ENCODE measurements at regions of chr20 and their contacts with region 1.

Region 1: DNA sequence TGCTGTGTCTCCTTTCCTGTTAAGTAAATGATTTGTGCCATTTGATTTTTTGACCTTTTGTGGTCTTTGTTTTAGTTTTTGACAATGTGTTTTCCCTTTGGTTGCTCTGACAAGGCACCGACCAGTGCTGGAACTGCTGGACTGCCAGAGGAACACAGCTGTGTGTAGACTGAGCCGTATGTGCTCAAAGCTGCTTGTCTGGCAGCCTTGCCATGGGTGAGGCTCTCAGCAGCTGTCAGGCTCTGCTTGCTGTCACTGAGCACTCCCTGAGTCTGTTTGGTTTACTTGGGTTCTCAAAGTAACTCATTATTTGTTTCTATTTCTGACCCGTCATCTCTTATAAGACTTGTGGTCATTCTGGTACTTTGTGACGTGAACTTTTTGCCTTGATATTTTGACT is 15.1 kb upstream of the SNRPB start:
- DNase-seq: no peak
- ATAC-seq: no peak
- H3K4me3 ChIP-seq: no peak overlapping the region
- H3K4me3 Mint-ChIP-seq: no peak overlapping the region
- H3K27ac ChIP-seq: no peak overlapping the region
- H3K27ac Mint-ChIP-seq: no peak overlapping the region
- H3K4me1 ChIP-seq: no peaks in the 10 kb centered on the region
- H3K4me1 Mint-ChIP-seq: no peaks in the 10 kb centered on the region
- H3K27me3 ChIP-seq: no peaks in the 10 kb centered on the region
- H3K27me3 Mint-ChIP-seq: no peaks in the 10 kb centered on the region
- CTCF ChIP-seq: no peak

Region 2: DNA sequence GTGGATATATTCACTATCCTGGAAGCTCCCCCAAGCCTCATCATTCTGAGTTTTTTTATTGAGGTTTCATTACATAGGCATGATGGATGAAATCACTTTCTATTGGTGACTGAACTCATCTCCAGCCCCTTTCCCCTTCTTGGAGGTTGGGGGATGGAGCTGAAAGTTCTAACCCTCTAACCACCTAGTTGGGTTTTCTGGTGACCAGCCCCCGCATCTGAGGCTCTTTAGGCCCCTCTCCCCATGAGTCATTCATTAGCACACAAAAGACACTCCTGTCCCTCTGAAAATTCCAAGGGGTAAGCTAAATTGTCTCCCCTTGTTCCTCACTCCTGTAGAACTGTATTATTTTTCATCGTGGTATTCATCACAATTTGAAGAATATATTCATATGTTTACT is 1144.2 kb after region 1 on chr20:
- CTCF ChIA-PET with region 1: no interaction called
- POLR2A ChIA-PET with region 1: no interaction called
- intact Hi-C with region 1: loop called in 1 of 2 experiments (anchors 5 kb)
- DNase-seq: no peak
- ATAC-seq: no peak
- H3K4me3 ChIP-seq: no peak overlapping the region
- H3K4me3 Mint-ChIP-seq: no peak overlapping the region
- H3K27ac ChIP-seq: no peak overlapping the region
- H3K27ac Mint-ChIP-seq: no peak overlapping the region
- H3K4me1 ChIP-seq: no peaks in the 10 kb centered on the region
- H3K4me1 Mint-ChIP-seq: no peaks in the 10 kb centered on the region
- H3K27me3 ChIP-seq: no peaks in the 10 kb centered on the region
- H3K27me3 Mint-ChIP-seq: no peaks in the 10 kb centered on the region
- CTCF ChIP-seq: no peak

Measured in CD8-positive, alpha-beta T cell (primary cell).